PC-9 (cell line): ENCODE measurements at regions of chr10 and their contacts with region 1.

Region 1: GRCh38 chr10:121942749-121943416 is 15.1 kb upstream of the ATE1 start:
- DNase-seq: peak in 1 of 2 experiments; percentile 36
- H3K4me3 ChIP-seq: no peak overlapping the region
- H3K27ac ChIP-seq: no peak overlapping the region
- H3K4me1 ChIP-seq: 0 out of 2 replicates have a peak, but pooled peaks cover 9% of the 10 kb centered on the region
- H3K27me3 ChIP-seq: no peaks in the 10 kb centered on the region
- CTCF ChIP-seq: no peak

Region 2: DNA sequence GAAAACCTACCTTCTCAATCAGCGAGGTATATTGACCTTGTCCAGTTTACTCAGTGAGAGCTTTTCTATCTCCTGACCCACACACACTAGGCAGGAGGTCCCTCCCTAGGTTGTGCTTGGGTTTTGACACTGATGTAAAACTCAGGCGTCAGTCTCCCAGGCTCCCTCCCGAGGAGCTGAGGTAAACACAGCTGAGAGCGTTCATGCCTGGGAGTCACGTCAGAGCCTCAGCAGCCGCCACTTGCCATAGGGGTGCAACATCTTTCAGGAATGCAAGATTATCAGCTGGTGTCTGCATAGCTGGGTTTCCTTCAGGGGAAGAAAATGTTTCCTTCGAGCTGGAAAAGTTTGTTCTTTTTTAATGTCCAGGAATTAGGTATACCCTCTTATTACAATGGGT is 415.2 kb before region 1 on chr10:
- CTCF ChIA-PET with region 1: no interaction called
- POLR2A ChIA-PET with region 1: interaction called, 19 read pairs
- intact Hi-C with region 1: no loop called
- DNase-seq: no peak
- H3K4me3 ChIP-seq: no peak overlapping the region
- H3K27ac ChIP-seq: no peak overlapping the region
- H3K4me1 ChIP-seq: no peaks in the 10 kb centered on the region
- H3K27me3 ChIP-seq: peaks cover 91% of the 10 kb centered on the region
- CTCF ChIP-seq: no peak